Activated T-helper 2 cell treated with anti-CD3 and anti-CD28 coated beads, Interferon-gamma antibody, Interleukin-2, Interleukin-4, amounts not matched to agents 10 μg/mL and 5 μg/mL and 100 μg/mL, durations not matched to agents 14 hours and 24 hours and 36 hours (primary cell): ENCODE measurements at regions of chr1 and their contacts with region 1.

Region 1: DNA sequence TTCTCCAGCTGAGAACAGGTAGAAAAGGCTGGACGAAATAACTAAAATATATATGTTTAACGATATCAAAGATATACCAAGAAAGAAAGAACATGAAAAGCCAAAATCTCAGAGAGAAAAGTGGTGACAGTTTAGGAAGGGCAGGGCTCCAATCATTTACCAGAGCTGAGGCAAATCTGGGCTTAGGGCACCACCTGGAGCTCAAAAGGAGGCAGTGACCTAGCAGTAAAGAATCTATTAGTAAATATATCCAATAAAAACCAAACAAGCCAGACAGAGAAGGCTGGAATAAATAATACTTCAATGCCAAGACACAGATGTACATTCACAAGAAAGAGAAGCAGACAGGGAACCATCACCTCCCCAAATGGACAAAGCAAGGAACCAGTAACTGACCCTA is 43.5 kb downstream of the CHIA start:
- DNase-seq: no peak
- H3K4me3 Mint-ChIP-seq: no peak overlapping the region
- H3K27ac Mint-ChIP-seq: no peak overlapping the region
- H3K4me1 Mint-ChIP-seq: no peaks in the 10 kb centered on the region
- H3K27me3 Mint-ChIP-seq: no peaks in the 10 kb centered on the region

Region 2: GRCh38 chr1:111030590-111030989 is 303.6 kb before region 1 on chr1:
- intact Hi-C with region 1: loop called (anchors 2 kb)
- DNase-seq: peak; percentile 27
- H3K4me3 Mint-ChIP-seq: no peak overlapping the region
- H3K27ac Mint-ChIP-seq: no peak overlapping the region
- H3K4me1 Mint-ChIP-seq: no peaks in the 10 kb centered on the region
- H3K27me3 Mint-ChIP-seq: peaks cover 27% of the 10 kb centered on the region

Region 3: GRCh38 chr1:111801071-111801841 is 467.1 kb after region 1 on chr1:
- intact Hi-C with region 1: no loop called
- DNase-seq: no peak
- H3K4me3 Mint-ChIP-seq: no peak overlapping the region
- H3K27ac Mint-ChIP-seq: no peak overlapping the region
- H3K4me1 Mint-ChIP-seq: no peaks in the 10 kb centered on the region
- H3K27me3 Mint-ChIP-seq: peaks cover 6% of the 10 kb centered on the region